ENCODE measurements at regions of chr5 and their contacts with region 1.

Region 1: DNA sequence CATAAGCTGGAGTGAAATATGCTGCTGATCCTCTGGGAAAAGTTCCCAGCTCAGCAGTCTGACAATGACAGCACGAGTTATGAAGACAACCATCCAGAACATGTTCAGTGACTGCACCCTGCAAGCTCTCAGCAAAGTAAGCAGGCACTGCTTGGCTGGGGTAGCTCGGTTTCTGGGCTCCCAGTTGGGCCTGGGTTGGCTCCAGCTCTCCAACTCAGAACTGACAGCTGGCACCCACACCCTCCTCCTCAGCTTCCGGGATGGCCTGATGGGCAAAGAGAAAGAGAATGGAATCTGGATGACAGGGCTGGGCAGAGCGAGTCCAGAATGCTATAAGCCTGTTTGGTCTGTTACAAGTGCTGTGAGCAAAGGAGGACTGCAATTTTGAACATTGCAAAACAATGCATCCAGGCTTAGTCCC is 185.0 kb downstream of the CSNK1G3 start:
- DNase-seq: no peak

Region 2: GRCh38 chr5:123582550-123583285 is 114.2 kb before region 1 on chr5:
- intact Hi-C with region 1: no loop called
- DNase-seq: no peak

Region 3: DNA sequence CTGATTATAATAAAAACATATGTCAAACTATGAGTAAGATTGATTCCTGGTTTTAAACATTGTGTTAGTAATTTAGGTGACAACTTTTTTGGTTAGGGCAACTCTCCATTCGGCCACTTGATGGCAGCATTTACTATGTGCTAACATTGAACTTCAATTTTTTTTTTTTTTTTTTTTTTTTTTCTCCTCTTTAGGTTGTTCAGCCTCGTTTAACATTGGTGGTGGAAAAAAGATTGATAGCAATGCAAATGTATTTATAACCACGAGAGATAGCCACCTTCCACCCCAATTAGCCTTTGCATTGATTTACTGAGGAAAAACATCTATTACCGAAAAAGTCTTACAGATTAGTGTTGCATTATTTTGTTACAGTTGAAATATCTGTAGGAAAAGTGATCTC is 25.9 kb before region 1 on chr5:
- intact Hi-C with region 1: no loop called
- DNase-seq: no peak

Region 4: DNA sequence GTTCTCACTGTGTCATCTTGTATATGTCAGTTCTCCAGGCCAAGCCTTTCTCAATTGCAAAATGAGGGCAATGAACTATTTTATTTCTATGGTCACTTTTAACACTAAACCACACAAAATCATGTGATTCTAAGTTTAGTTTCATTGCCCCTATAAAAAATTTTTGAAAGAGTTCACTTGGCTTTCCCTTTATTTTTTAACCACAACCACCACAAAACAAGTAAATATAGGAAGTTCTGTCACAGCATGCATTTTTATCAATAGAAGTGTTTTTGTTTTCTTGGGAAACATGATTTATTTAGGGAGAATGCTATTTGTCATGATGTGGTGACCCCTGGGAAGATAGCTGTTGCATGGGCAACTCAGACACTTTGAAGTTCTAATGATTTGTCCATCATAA is 15.9 kb before region 1 on chr5:
- intact Hi-C with region 1: no loop called
- DNase-seq: no peak

Region 5: DNA sequence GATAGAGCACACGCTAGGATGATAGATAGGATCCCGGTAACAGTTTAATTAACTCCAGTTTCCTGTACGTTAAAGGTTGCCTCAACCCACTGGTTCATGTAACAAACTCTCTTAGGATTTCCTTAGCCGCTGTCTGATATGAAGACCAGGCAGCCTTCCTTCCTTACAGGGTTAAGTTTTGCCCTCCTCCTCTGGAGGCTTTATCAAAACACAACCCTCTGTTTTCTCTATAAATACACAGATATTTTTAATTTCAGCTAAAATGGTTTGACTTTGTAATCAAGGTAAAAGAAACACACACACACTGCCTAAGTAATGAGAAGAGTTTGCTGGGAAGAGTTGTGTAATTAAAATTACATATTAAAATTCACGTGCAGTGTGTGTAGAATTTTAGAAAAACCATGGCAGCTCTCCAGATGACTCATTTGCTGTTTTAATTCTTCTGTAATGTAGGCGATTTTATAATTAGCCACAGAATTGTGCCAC is 184.9 kb after region 1 on chr5:
- intact Hi-C with region 1: loop called in 1 of 2 experiments (anchors 10 kb)
- DNase-seq: no peak

Region 6: GRCh38 chr5:123916331-123917121 is 219.6 kb after region 1 on chr5:
- intact Hi-C with region 1: no loop called
- DNase-seq: no peak

Measured in posterior vena cava (tissue), 2 donors.